Naive thymus-derived CD4-positive, alpha-beta T cell (primary cell): ENCODE measurements at regions of chr6 and their contacts with region 1.

Region 1: DNA sequence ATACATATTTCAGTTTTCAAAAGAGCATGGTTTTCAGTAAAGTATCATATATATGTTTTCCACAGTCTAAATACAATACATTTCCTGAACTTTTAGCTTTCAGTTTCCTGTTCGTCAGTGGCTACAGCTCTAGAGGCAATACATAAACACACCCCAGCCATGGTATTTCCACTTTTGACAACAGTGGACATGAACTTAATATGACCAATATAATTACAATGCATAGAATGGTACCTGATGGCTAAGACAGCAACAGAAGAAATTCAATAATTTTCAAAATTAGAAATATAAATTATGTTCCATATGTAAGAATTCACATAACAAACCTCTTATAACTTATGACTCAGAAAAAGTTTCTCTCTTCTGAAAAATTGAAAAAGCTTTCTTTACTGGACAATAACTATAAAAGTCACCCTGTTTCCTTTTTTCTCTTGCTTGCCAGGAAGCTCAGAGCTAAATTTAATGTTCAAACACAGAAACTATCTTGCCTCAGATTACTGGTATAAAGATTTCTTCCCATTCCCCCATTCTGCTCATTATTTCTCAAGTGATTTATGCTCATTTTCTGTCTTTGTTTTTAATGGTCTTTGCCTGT is 19.2 kb downstream of the FKBP5 start:
- DNase-seq: peak in 4 of 9 donors; percentile 29 to 57 (median 38)
- ATAC-seq: peak; percentile 78
- H3K4me3 ChIP-seq: peak overlapping the region; percentile 43
- H3K4me3 Mint-ChIP-seq: peak overlapping the region in 9 of 10 donors; percentile 56 to 88 (median 81)
- H3K27ac ChIP-seq: peak overlapping the region; percentile 79
- H3K27ac Mint-ChIP-seq: peak overlapping the region in 7 of 9 donors; percentile 84 to 98 (median 93)
- H3K4me1 ChIP-seq: peaks cover 33 to 48% of the 10 kb centered on the region in 2 donors
- H3K4me1 Mint-ChIP-seq: peaks cover 32 to 63% (median 48%) of the 10 kb centered on the region in 7 donors
- H3K27me3 ChIP-seq: no peaks in the 10 kb centered on the region
- H3K27me3 Mint-ChIP-seq: no peaks in the 10 kb centered on the region

Region 2: DNA sequence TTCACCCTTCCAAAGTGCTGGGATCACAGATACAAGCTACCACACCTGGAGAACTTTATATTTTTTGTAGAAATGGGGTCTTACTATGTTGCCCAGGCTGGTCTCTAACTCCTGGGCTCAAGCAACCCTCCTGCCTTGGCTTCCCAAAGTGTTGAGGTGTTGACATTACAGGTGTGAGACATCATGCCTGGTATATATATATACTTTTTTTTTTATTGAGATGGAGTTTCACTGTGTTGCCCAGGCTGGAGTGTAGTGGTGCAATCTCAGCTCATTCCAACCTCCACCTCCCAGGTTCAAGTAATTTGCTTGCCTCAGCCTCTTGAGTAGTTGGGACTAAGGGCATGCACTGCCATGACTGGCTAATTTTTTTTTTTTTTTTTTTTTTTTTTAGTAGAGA is 13.7 kb after region 1 on chr6:
- CTCF ChIA-PET with region 1: interaction called, 10 read pairs
- POLR2A ChIA-PET with region 1: interaction called, 31 read pairs
- intact Hi-C with region 1: loop called (anchors 1 kb)
- DNase-seq: no peak
- ATAC-seq: no peak
- H3K4me3 ChIP-seq: no peak overlapping the region
- H3K4me3 Mint-ChIP-seq: peak overlapping the region in 7 of 10 donors; percentile 7 to 72 (median 51)
- H3K27ac ChIP-seq: no peak overlapping the region
- H3K27ac Mint-ChIP-seq: peak overlapping the region in 5 of 9 donors; percentile 42 to 85 (median 77)
- H3K4me1 ChIP-seq: peaks cover 20 to 42% of the 10 kb centered on the region in 2 donors
- H3K4me1 Mint-ChIP-seq: peaks cover 19 to 64% (median 50%) of the 10 kb centered on the region in 7 donors
- H3K27me3 ChIP-seq: no peaks in the 10 kb centered on the region
- H3K27me3 Mint-ChIP-seq: no peaks in the 10 kb centered on the region